ENCODE measurements at regions of chrX and their contacts with region 1.

Region 1: DNA sequence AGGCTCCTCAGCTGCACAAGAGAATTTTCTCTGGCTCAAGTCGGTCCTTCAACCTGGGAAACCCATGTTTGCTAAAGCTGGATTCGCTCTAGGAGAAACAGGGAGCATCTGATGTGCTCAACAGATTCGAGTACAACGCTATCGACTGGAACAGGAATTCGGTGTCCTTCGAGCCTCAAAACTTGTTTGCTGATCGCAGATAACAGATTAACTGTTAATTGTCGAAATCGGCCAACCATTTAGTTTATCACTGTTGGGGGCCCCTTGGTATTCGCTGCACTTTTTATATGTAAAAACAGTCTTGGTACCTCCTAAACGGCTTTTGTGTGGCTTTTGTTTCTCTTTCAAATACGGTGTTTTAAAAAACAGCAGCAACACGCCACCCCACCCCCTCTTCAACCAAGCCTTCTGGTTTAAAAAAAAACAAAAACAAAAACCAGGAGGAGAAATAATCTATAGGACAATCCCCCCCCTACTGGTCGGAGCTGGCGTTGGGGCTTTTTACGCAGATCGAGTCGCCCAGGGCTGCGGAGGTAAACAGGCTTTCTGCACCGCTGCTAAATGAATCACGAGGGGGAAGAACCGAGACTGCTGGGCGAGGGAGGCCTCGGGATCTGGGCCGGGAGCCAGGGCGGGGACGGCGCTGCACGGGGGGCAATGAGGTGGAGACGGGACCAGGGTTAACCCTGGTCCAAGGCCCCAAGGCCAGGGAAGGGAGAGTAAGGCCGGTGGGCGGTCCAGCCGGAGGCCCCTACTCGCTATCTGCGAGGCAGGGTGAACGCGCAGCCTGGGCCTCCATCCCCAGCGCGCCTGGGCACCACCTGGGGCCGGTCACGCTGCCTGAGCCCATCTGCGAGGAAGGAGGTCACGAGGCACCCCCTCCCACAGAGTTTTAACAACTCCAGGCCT is 71.7 kb upstream of the BCOR start:
- DNase-seq: peak; percentile 62 to 91 (median 81)
- ATAC-seq: peak; percentile 66
- H3K4me3 ChIP-seq: peak overlapping the region; percentile 42 to 61
- H3K4me3 Mint-ChIP-seq: peak overlapping the region; percentile 85
- H3K27ac ChIP-seq: peak overlapping the region; percentile 83 to 95
- H3K27ac Mint-ChIP-seq: peak overlapping the region; percentile 96
- H3K4me1 ChIP-seq: peaks cover 49% of the 10 kb centered on the region
- H3K4me1 Mint-ChIP-seq: peaks cover 48% of the 10 kb centered on the region
- H3K27me3 ChIP-seq: no peaks in the 10 kb centered on the region
- H3K27me3 Mint-ChIP-seq: no peaks in the 10 kb centered on the region
- CTCF ChIP-seq: peak; percentile 22

Region 2: DNA sequence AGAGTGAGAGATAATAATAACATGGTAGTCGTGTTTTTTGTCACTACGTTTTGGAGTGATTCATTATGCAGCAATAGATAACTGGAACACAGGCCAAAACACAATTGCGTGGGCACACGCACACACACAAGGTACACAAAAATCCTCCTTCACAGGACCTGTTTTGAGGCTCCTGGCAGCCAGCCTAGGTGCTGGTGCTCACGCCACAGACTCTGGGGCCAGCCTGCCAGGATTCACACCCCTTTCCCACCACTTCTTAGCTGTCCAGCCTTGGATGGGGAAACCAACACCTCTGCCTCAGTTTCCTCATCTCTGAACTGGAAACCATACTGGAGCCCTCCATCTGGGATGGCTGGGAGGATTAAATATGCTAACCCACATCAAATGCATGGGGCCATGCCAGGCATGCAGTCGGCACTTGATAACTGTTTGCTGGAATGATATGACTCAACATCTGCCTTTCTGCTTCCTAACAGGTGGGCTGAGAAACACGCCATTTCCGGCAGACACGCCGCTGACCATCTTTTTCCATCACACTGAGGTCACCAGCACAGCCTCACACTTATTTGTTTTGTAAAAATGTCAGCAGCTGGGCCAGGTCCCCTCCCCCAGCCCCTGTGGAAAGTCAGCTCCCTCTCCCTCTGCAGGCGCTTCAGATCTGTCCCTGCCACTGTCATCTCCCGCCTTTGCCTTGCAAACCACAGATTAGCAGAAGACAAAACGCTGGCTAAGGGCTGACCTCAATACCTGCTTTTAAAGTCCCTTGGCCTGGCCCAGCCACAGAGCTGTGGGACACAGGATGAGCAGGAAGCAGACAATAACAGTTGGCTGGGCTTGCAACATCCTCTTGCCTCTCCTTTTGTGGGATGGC is 309.2 kb before region 1 on chrX:
- CTCF ChIA-PET with region 1: no interaction called
- POLR2A ChIA-PET with region 1: no interaction called
- intact Hi-C with region 1: loop called in 1 of 2 experiments (anchors 5 kb)
- DNase-seq: peak; percentile 9 to 85 (median 68)
- ATAC-seq: peak; percentile 48
- H3K4me3 ChIP-seq: no peak overlapping the region
- H3K4me3 Mint-ChIP-seq: no peak overlapping the region
- H3K27ac ChIP-seq: no peak overlapping the region
- H3K27ac Mint-ChIP-seq: peak overlapping the region; percentile 83
- H3K4me1 ChIP-seq: peaks cover 26% of the 10 kb centered on the region
- H3K4me1 Mint-ChIP-seq: peaks cover 31% of the 10 kb centered on the region
- H3K27me3 ChIP-seq: no peaks in the 10 kb centered on the region
- H3K27me3 Mint-ChIP-seq: no peaks in the 10 kb centered on the region
- CTCF ChIP-seq: no peak

Region 3: GRCh38 chrX:40013266-40014195 is 155.9 kb before region 1 on chrX:
- CTCF ChIA-PET with region 1: no interaction called
- POLR2A ChIA-PET with region 1: no interaction called
- intact Hi-C with region 1: loop called in 1 of 2 experiments (anchors 5 kb)
- DNase-seq: peak in 6 of 9 experiments; percentile 18 to 66 (median 46)
- ATAC-seq: peak; percentile 37
- H3K4me3 ChIP-seq: peak overlapping the region; percentile 54 to 57
- H3K4me3 Mint-ChIP-seq: peak overlapping the region; percentile 76
- H3K27ac ChIP-seq: no peak overlapping the region
- H3K27ac Mint-ChIP-seq: no peak overlapping the region
- H3K4me1 ChIP-seq: peaks cover 40% of the 10 kb centered on the region
- H3K4me1 Mint-ChIP-seq: peaks cover 27% of the 10 kb centered on the region
- H3K27me3 ChIP-seq: peaks cover 0 to 3% of the 10 kb centered on the region in 2 experiments
- H3K27me3 Mint-ChIP-seq: peaks cover 2% of the 10 kb centered on the region
- CTCF ChIP-seq: no peak

Region 4: GRCh38 chrX:40201329-40201885 is 32.0 kb after region 1 on chrX:
- CTCF ChIA-PET with region 1: no interaction called
- POLR2A ChIA-PET with region 1: no interaction called
- intact Hi-C with region 1: loop called in 1 of 2 experiments (anchors 5 kb)
- DNase-seq: peak in 5 of 9 experiments; percentile 2 to 77 (median 41)
- ATAC-seq: peak; percentile 95
- H3K4me3 ChIP-seq: no peak overlapping the region
- H3K4me3 Mint-ChIP-seq: no peak overlapping the region
- H3K27ac ChIP-seq: peak overlapping the region in 1 of 2 experiments; percentile 66
- H3K27ac Mint-ChIP-seq: peak overlapping the region; percentile 82
- H3K4me1 ChIP-seq: peaks cover 12% of the 10 kb centered on the region
- H3K4me1 Mint-ChIP-seq: peaks cover 18% of the 10 kb centered on the region
- H3K27me3 ChIP-seq: no peaks in the 10 kb centered on the region
- H3K27me3 Mint-ChIP-seq: no peaks in the 10 kb centered on the region
- CTCF ChIP-seq: no peak